ENCODE measurements at regions of chr10 and their contacts with region 1.

Region 1: GRCh38 chr10:43436400-43437140 is at the start of gene ZNF487:
- DNase-seq: peak; percentile 97
- ATAC-seq: peak; percentile 97
- H3K4me3 Mint-ChIP-seq: peak within 1 kb of the TSS; percentile 97
- H3K27ac Mint-ChIP-seq: peak within 1 kb of the TSS; percentile 99
- H3K4me1 Mint-ChIP-seq: peaks cover 13% of the 10 kb centered on the region
- H3K27me3 Mint-ChIP-seq: no peaks in the 10 kb centered on the region
- total RNA-seq, gene ZNF487: 3.3 to 3.4 TPM

Region 2: GRCh38 chr10:43292755-43293676 is 143.6 kb before region 1 on chr10:
- POLR2A ChIA-PET with region 1: interaction called, 10 read pairs
- DNase-seq: peak; percentile 58
- ATAC-seq: peak; percentile 57
- H3K4me3 Mint-ChIP-seq: peak overlapping the region; percentile 56
- H3K27ac Mint-ChIP-seq: peak overlapping the region; percentile 83
- H3K4me1 Mint-ChIP-seq: peaks cover 48% of the 10 kb centered on the region
- H3K27me3 Mint-ChIP-seq: peaks cover 23% of the 10 kb centered on the region

Region 3: GRCh38 chr10:43420369-43421200 is 16.0 kb before region 1 on chr10:
- POLR2A ChIA-PET with region 1: interaction called, 81 read pairs
- DNase-seq: peak; percentile 89
- ATAC-seq: peak; percentile 89
- H3K4me3 Mint-ChIP-seq: peak overlapping the region; percentile 89
- H3K27ac Mint-ChIP-seq: peak overlapping the region; percentile 96
- H3K4me1 Mint-ChIP-seq: peaks cover 35% of the 10 kb centered on the region
- H3K27me3 Mint-ChIP-seq: no peaks in the 10 kb centered on the region

Region 4: GRCh38 chr10:43448742-43449141 is 12.2 kb after region 1 on chr10:
- POLR2A ChIA-PET with region 1: interaction called, 10 read pairs
- DNase-seq: no peak
- ATAC-seq: no peak
- H3K4me3 Mint-ChIP-seq: no peak overlapping the region
- H3K27ac Mint-ChIP-seq: no peak overlapping the region
- H3K4me1 Mint-ChIP-seq: peaks cover 22% of the 10 kb centered on the region
- H3K27me3 Mint-ChIP-seq: no peaks in the 10 kb centered on the region

Measured in activated naive CD8-positive, alpha-beta T cell treated with anti-CD3 and anti-CD28 coated beads, Interleukin-2, amount 10 ng/mL, durations not matched to agents 7 days and 5 days (primary cell).